ENCODE measurements at regions of chr1 and their contacts with region 1.

Region 1: DNA sequence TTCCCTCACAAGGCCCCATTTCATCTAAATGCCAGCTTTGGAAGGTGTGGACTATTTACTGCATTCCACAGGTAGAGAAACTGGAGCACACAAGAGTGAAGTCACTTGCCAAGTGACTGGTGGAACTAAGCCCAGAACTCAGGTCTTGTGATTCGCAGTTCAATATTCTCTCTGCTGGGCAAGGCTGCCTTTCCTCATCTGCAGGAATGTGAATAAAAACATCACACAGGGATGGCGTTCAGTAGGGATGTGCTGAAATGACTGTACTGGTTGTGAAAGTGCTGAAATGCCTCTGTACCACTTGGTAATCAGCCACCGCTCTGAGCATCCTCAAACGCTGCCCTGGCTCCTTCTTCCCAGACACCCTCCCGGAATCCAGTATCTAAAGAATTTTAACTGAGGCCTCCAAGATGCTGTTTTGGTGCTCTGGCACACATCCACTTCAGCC is 145.6 kb downstream of the HIVEP3 start:
- DNase-seq: peak in 1 of 10 donors; percentile 18
- H3K4me3 ChIP-seq: no peak overlapping the region
- H3K27ac ChIP-seq: peak overlapping the region in 5 of 59 donors; percentile 11 to 33 (median 24)
- H3K27me3 ChIP-seq: no peaks in the 10 kb centered on the region
- CTCF ChIP-seq: no peak

Region 2: DNA sequence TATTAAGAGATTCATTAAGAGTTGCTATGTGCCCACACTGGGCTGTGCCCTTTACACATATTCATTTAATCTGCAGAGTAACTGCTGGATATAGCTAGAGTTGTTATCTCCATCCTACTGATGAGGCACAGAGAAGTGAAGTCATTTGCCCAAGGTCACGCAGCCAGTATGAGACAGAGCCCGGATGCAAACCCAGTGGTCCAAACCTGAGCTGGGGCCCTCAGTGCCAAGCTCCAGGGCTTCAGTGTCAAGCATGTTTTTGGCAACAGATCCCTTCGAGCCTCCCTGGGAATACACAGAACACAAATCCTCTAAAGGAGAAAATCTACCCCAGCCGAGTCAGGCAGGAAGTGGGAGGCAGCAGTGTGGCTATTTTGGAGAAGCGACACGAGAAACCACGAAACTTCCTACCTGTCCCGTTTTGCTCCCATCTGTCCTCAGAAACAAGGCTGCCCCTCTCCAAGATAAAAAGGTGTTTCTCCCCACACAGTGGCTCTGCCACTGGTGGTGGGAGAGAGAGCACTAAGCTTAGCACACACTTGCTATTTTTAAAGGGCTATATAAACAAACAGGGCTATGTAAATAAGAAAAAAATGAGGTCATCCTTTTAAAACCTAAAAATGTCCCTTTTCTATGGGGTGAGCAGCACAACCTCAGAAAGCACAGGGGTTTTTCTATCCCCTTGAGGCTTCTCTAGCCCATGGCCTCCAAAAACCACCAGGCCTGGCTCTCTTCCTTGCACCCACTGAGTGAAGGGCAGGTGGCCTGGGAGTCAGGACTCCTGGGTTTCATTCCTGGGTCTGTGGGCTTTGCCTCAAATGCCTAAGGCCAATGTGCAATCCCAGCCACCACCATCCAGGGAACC is 150.1 kb before region 1 on chr1:
- intact Hi-C with region 1: loop called (anchors 1 to 2 kb)
- DNase-seq: no peak
- H3K4me3 ChIP-seq: peak overlapping the region in 1 of 59 donors; percentile 19
- H3K27ac ChIP-seq: peak overlapping the region in 3 of 59 donors; percentile 5 to 50 (median 33)
- H3K27me3 ChIP-seq: no peaks in the 10 kb centered on the region
- CTCF ChIP-seq: no peak

Region 3: GRCh38 chr1:41662061-41662764 is 111.0 kb before region 1 on chr1:
- intact Hi-C with region 1: loop called in 1 of 2 experiments (anchors 5 kb)
- DNase-seq: peak in 8 of 10 donors; percentile 37 to 79 (median 66)
- H3K4me3 ChIP-seq: peak overlapping the region; percentile 49 to 83 (median 73)
- H3K27ac ChIP-seq: peak overlapping the region in 57 of 59 donors; percentile 39 to 92 (median 82)
- H3K27me3 ChIP-seq: no peaks in the 10 kb centered on the region
- CTCF ChIP-seq: no peak

Region 4: GRCh38 chr1:42035830-42036604 is 262.8 kb after region 1 on chr1:
- intact Hi-C with region 1: loop called in 1 of 2 experiments (anchors 10 kb)
- DNase-seq: peak; percentile 92 to 97 (median 96)
- H3K4me3 ChIP-seq: peak overlapping the region; percentile 53 to 98 (median 90)
- H3K27ac ChIP-seq: peak overlapping the region in 45 of 59 donors; percentile 3 to 85 (median 66)
- H3K27me3 ChIP-seq: no peaks in the 10 kb centered on the region
- CTCF ChIP-seq: peak in 3 of 56 donors; percentile 2 to 11 (median 10)

Measured in dorsolateral prefrontal cortex (tissue), 120 donors.